B cell (primary cell): ENCODE measurements at regions of chr11 and their contacts with region 1.

Region 1: GRCh38 chr11:68099474-68100405 is 21.4 kb downstream of the CHKA start:
- DNase-seq: peak; percentile 28
- ATAC-seq: no peak
- H3K4me3 ChIP-seq: peak overlapping the region in 3 of 5 experiments; percentile 5 to 22 (median 12)
- H3K4me3 Mint-ChIP-seq: peak overlapping the region; percentile 50
- H3K27ac ChIP-seq: peak overlapping the region; percentile 14 to 68
- H3K27ac Mint-ChIP-seq: peak overlapping the region; percentile 78
- H3K4me1 ChIP-seq: peaks cover 14 to 19% of the 10 kb centered on the region in 2 donors
- H3K4me1 Mint-ChIP-seq: peaks cover 23% of the 10 kb centered on the region
- H3K27me3 ChIP-seq: no peaks in the 10 kb centered on the region
- H3K27me3 Mint-ChIP-seq: no peaks in the 10 kb centered on the region
- CTCF ChIP-seq: no peak

Region 2: DNA sequence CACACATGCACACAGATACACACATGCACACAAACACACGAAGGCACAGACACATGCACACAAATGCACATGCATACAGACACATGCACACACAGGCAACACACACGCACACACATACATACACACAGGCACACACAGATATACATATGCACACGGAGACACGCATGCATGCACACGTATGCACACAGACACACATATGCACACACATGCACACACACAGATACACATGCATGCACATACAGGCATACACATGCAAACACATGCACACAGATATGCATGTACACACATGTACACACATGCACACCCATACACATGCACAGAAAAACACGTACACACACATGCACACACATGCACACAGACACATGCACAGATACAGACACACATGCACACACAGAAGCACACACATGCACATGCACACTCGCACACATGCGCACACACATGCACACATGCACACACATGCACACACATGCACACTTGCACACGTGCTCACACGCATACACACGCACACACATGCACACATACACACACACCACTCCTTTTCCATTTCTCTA is 354.5 kb before region 1 on chr11:
- CTCF ChIA-PET with region 1: no interaction called
- POLR2A ChIA-PET with region 1: no interaction called
- intact Hi-C with region 1: no loop called
- DNase-seq: no peak
- ATAC-seq: no peak
- H3K4me3 ChIP-seq: no peak overlapping the region
- H3K4me3 Mint-ChIP-seq: no peak overlapping the region
- H3K27ac ChIP-seq: no peak overlapping the region
- H3K27ac Mint-ChIP-seq: no peak overlapping the region
- H3K4me1 ChIP-seq: peaks cover 0 to 4% of the 10 kb centered on the region in 2 donors
- H3K4me1 Mint-ChIP-seq: peaks cover 8% of the 10 kb centered on the region
- H3K27me3 ChIP-seq: no peaks in the 10 kb centered on the region
- H3K27me3 Mint-ChIP-seq: peaks cover 7% of the 10 kb centered on the region
- CTCF ChIP-seq: no peak

Region 3: GRCh38 chr11:68150039-68150438 is 50.3 kb after region 1 on chr11:
- CTCF ChIA-PET with region 1: no interaction called
- POLR2A ChIA-PET with region 1: interaction called, 10 read pairs
- intact Hi-C with region 1: no loop called
- DNase-seq: no peak
- ATAC-seq: no peak
- H3K4me3 ChIP-seq: no peak overlapping the region
- H3K4me3 Mint-ChIP-seq: no peak overlapping the region
- H3K27ac ChIP-seq: no peak overlapping the region
- H3K27ac Mint-ChIP-seq: no peak overlapping the region
- H3K4me1 ChIP-seq: no peaks in the 10 kb centered on the region
- H3K4me1 Mint-ChIP-seq: no peaks in the 10 kb centered on the region
- H3K27me3 ChIP-seq: no peaks in the 10 kb centered on the region
- H3K27me3 Mint-ChIP-seq: no peaks in the 10 kb centered on the region
- CTCF ChIP-seq: no peak

Region 4: GRCh38 chr11:68257475-68258362 is 158.0 kb after region 1 on chr11:
- CTCF ChIA-PET with region 1: no interaction called
- POLR2A ChIA-PET with region 1: no interaction called
- intact Hi-C with region 1: no loop called
- DNase-seq: peak; percentile 91
- ATAC-seq: peak; percentile 94
- H3K4me3 ChIP-seq: no peak overlapping the region
- H3K4me3 Mint-ChIP-seq: peak overlapping the region; percentile 52
- H3K27ac ChIP-seq: peak overlapping the region; percentile 4 to 38
- H3K27ac Mint-ChIP-seq: peak overlapping the region; percentile 91
- H3K4me1 ChIP-seq: peaks cover 11 to 21% of the 10 kb centered on the region in 2 donors
- H3K4me1 Mint-ChIP-seq: peaks cover 24% of the 10 kb centered on the region
- H3K27me3 ChIP-seq: no peaks in the 10 kb centered on the region
- H3K27me3 Mint-ChIP-seq: no peaks in the 10 kb centered on the region
- CTCF ChIP-seq: peak; percentile 92